Activated CD4-positive, alpha-beta memory T cell treated with anti-CD3 and anti-CD28 coated beads, Interleukin-2, amount 10 ng/mL, durations not matched to agents 7 days and 5 days (primary cell): ENCODE measurements at regions of chr5 and their contacts with region 1.

Region 1: DNA sequence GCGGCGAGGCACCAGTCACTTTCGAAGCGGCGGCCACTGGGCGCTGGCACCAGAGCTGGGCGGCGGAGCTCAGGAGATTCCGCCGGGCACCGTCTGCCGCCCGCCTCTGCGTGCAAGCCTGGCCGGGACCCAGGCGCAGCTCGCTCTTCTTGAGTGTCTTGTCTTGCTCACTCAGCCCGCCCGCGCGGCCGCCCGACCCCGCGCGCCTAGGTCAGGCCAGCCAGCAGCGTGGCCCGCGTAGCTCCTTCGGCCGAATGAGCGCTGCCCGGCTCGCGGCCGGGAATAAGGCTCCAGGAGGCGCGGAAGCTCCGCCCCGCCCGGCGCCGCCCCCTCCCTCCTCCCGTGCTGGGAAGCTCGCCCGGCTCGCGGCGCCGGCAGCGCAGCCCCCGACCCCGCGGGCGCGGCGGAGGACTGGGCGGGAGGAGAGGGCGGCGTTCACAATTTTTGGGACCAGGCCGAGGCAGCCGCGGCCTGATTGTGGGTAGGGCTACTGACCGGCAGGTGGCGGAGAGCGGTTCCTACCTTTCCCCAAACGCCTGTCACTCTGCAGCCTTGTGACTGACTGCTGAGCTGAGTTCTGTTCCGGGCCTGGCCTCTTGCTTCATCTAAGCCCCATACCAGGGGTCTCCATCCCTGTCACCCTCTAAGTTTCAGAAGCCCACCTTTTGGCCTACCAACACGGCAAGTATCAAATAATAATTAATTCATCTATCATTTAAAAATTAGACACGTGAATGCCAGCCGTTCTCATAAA is at the start of gene HBEGF:
- DNase-seq: peak; percentile 63
- H3K4me3 Mint-ChIP-seq: peak within 1 kb of the TSS; percentile 96
- H3K27ac Mint-ChIP-seq: peak within 1 kb of the TSS; percentile 94
- H3K4me1 Mint-ChIP-seq: peaks cover 64% of the 10 kb centered on the region
- H3K27me3 Mint-ChIP-seq: peaks cover 3% of the 10 kb centered on the region
- total RNA-seq, gene HBEGF: 67.9 to 69.1 TPM

Region 2: GRCh38 chr5:140302786-140303639 is 43.5 kb before region 1 on chr5 and contains the start of gene PFDN1:
- CTCF ChIA-PET with region 1: interaction called, 14 read pairs
- POLR2A ChIA-PET with region 1: interaction called, 16 read pairs
- DNase-seq: peak; percentile 94
- H3K4me3 Mint-ChIP-seq: peak within 1 kb of the TSS; percentile 92
- H3K27ac Mint-ChIP-seq: peak within 1 kb of the TSS; percentile 80
- H3K4me1 Mint-ChIP-seq: peaks cover 40% of the 10 kb centered on the region
- H3K27me3 Mint-ChIP-seq: peaks cover 6% of the 10 kb centered on the region
- total RNA-seq, gene PFDN1: 52.3 to 55.8 TPM

Region 3: GRCh38 chr5:140336388-140336787 is 10.1 kb before region 1 on chr5:
- CTCF ChIA-PET with region 1: interaction called, 71 read pairs
- POLR2A ChIA-PET with region 1: interaction called, 3 read pairs
- DNase-seq: no peak
- H3K4me3 Mint-ChIP-seq: no peak overlapping the region
- H3K27ac Mint-ChIP-seq: no peak overlapping the region
- H3K4me1 Mint-ChIP-seq: peaks cover 58% of the 10 kb centered on the region
- H3K27me3 Mint-ChIP-seq: no peaks in the 10 kb centered on the region

Region 4: GRCh38 chr5:140372971-140373487 is 26.5 kb after region 1 on chr5:
- CTCF ChIA-PET with region 1: interaction called, 11 read pairs
- POLR2A ChIA-PET with region 1: no interaction called
- DNase-seq: peak; percentile 43
- H3K4me3 Mint-ChIP-seq: no peak overlapping the region
- H3K27ac Mint-ChIP-seq: no peak overlapping the region
- H3K4me1 Mint-ChIP-seq: peaks cover 3% of the 10 kb centered on the region
- H3K27me3 Mint-ChIP-seq: no peaks in the 10 kb centered on the region

Region 5: GRCh38 chr5:140560227-140560626 is 213.7 kb after region 1 on chr5:
- CTCF ChIA-PET with region 1: no interaction called
- POLR2A ChIA-PET with region 1: no interaction called
- DNase-seq: no peak
- H3K4me3 Mint-ChIP-seq: no peak overlapping the region
- H3K27ac Mint-ChIP-seq: no peak overlapping the region
- H3K4me1 Mint-ChIP-seq: peaks cover 48% of the 10 kb centered on the region
- H3K27me3 Mint-ChIP-seq: no peaks in the 10 kb centered on the region